ENCODE measurements at regions of chr3 and their contacts with region 1.

Region 1: GRCh38 chr3:156816800-156817645 is 9.1 kb upstream of the LEKR1 start:
- DNase-seq: peak; percentile 90
- H3K4me3 Mint-ChIP-seq: peak overlapping the region; percentile 92
- H3K27ac Mint-ChIP-seq: peak overlapping the region; percentile 98
- H3K4me1 Mint-ChIP-seq: peaks cover 75% of the 10 kb centered on the region
- H3K27me3 Mint-ChIP-seq: no peaks in the 10 kb centered on the region

Region 2: GRCh38 chr3:155870133-155870944 is 946.7 kb before region 1 on chr3 and contains the start of gene GMPS:
- intact Hi-C with region 1: loop called (anchors 5 kb)
- DNase-seq: peak; percentile 98
- H3K4me3 Mint-ChIP-seq: peak within 1 kb of the TSS; percentile 98
- H3K27ac Mint-ChIP-seq: peak within 1 kb of the TSS; percentile 96
- H3K4me1 Mint-ChIP-seq: peaks cover 23% of the 10 kb centered on the region
- H3K27me3 Mint-ChIP-seq: no peaks in the 10 kb centered on the region
- total RNA-seq, gene GMPS: 131 and 144 TPM in 2 replicates

Region 3: GRCh38 chr3:156230267-156230900 is 586.6 kb before region 1 on chr3:
- intact Hi-C with region 1: no loop called
- DNase-seq: no peak
- H3K4me3 Mint-ChIP-seq: no peak overlapping the region
- H3K27ac Mint-ChIP-seq: no peak overlapping the region
- H3K4me1 Mint-ChIP-seq: no peaks in the 10 kb centered on the region
- H3K27me3 Mint-ChIP-seq: peaks cover 5% of the 10 kb centered on the region

Region 4: DNA sequence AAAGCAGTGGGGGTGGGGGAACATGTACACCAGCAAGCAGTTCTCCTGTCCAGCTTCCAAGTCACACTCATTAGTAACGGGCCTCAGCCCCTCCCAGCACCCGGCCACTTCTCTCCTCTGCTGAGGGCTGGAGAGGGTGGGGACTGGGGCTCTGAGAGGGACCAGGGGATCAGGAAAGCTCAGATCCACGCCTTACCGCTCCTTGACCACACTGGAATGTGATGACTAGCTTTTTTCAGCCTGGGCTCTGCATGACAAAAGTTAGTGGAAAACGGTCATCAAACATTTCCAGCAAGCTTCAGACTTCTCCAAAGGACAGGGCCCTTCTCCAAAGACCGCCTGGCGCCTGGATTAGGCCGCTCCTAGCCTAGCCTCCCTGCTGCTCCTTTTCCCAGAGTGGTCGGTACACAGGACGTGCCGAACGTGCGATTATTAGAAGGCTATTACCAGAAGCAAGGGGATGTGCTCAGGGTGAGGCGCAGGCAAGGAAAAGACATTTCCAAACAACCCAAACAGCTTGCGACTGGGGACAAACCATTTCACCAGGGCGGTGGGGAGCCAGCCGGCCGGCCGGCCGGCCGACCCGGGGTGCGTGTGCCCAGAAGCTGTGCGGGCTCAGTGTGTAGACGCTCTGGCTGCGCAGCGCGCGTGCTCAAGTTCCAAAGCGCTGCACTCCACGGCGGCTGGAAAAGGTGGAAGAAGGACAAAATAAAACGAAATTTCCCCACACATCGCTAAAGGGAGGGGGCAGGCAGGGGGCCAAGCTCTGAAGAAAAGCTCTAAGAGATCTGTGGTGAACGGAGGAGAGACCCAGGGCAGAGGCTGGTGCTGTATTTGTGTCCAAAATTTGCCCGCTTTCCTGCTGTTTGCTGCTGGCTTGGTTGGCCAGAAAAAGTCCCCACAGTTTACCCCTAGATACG is 211.1 kb before region 1 on chr3:
- intact Hi-C with region 1: loop called (anchors 5 kb)
- DNase-seq: no peak
- H3K4me3 Mint-ChIP-seq: peak overlapping the region; percentile 82
- H3K27ac Mint-ChIP-seq: peak overlapping the region; percentile 29
- H3K4me1 Mint-ChIP-seq: peaks cover 46% of the 10 kb centered on the region
- H3K27me3 Mint-ChIP-seq: peaks cover 11% of the 10 kb centered on the region

Region 5: DNA sequence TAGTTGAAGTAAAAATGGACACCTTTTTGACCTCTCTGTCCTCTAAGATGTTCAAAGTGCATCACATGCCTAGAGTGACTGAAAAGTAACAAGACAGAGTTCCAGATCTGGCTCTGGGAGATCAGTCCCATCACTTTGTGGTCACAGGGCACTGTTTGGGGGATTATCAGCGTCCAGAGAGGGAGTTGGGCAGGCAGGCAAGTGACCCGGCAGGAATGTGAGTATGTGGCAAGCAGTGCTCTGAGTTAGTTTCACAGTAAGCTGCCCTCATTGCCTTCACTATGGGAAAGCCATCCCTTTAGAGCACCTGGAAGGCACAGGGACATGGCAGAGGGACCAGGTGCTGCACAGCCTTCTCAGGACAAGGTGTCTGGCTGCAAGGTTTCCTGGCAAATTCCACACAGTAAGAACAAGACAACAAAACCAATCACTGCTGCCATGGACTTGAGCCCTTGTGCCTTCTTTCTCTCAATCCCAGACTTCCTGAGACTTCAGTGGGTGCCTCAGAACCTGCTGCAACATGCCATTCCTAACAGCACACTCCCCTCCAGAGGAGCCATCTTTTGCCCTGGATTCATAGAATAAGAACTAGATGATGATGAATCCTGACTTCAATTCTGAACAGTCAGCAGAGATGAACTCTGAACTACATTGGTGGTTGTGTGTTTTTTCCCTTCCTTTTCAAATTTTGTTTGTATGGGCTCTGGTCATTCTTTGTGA is 87.4 kb before region 1 on chr3:
- intact Hi-C with region 1: no loop called
- DNase-seq: no peak
- H3K4me3 Mint-ChIP-seq: no peak overlapping the region
- H3K27ac Mint-ChIP-seq: no peak overlapping the region
- H3K4me1 Mint-ChIP-seq: peaks cover 9% of the 10 kb centered on the region
- H3K27me3 Mint-ChIP-seq: no peaks in the 10 kb centered on the region

Region 6: DNA sequence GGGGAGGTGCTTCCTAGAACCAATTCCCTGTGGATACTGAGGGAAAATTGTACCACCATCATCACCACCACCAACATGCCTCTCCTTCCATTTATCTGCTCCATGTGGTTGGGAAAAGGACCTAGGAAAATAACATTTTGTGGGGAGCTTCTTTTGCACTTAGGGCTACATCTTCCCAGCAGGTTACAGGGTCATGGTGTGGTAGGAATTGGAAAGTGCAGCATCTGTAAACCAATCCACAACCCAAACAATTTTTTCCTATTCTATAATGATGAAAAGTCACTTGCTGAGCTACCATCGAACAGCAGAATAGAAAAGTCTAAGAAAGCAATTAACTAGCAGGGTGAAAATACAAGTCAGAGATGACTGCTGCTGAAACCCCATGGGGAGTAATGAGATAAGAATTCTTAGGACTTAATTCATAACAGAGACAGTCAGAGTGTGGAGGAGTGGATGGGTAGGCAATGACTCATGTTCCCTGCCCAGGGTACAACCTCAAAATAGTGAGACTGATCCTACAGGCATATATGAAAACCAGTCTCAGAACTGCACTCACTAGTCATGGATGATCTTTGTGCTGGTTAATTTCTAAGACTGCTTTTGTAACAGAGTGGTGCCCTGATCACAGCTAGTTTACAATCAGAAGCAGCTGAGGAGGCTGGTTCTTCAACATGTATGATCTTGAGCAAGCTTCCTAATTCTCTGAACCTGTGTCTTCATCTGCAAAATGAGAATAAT is 28.9 kb before region 1 on chr3:
- intact Hi-C with region 1: loop called (anchors 1 kb)
- DNase-seq: no peak
- H3K4me3 Mint-ChIP-seq: no peak overlapping the region
- H3K27ac Mint-ChIP-seq: peak overlapping the region; percentile 10
- H3K4me1 Mint-ChIP-seq: peaks cover 48% of the 10 kb centered on the region
- H3K27me3 Mint-ChIP-seq: no peaks in the 10 kb centered on the region

Region 7: GRCh38 chr3:156920399-156920798 is 103.4 kb after region 1 on chr3:
- intact Hi-C with region 1: no loop called
- DNase-seq: no peak
- H3K4me3 Mint-ChIP-seq: no peak overlapping the region
- H3K27ac Mint-ChIP-seq: no peak overlapping the region
- H3K4me1 Mint-ChIP-seq: no peaks in the 10 kb centered on the region
- H3K27me3 Mint-ChIP-seq: peaks cover 12% of the 10 kb centered on the region

Region 8: DNA sequence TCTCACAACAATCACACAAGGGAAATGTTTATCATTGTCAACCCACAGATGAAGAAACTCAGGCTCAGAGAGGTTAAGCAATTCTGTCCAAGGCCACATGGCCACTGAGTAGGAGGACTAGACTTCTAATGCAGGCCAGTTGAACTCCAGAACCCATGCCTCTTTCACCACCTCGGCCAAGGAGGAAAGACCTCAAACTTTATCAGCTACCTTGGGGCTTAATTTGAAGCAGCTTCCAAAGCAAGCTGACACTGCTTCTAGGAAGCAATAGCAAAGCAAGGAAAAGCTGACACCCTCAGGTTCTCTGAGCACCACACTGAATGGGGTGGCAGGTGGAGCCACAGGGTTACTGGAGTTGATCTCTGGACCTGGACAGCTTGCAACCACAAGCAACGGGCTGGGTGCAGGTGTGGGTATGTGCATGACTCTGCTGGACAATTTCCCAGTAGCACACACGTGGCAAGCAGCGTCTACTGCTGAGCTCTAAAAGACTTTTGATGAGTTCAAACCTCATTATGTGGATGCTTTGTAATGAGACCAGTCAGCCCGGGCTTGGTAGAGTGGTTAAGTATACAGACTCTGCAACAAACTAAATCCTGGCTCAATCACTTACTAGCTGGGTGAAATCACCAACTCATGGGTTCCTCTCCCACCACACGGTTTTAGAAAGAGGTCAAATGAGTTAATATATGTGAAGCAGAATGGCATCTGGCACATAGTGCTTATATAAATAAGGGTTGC is 319.8 kb after region 1 on chr3:
- intact Hi-C with region 1: loop called (anchors 1 kb)
- DNase-seq: no peak
- H3K4me3 Mint-ChIP-seq: no peak overlapping the region
- H3K27ac Mint-ChIP-seq: peak overlapping the region; percentile 35
- H3K4me1 Mint-ChIP-seq: peaks cover 57% of the 10 kb centered on the region
- H3K27me3 Mint-ChIP-seq: no peaks in the 10 kb centered on the region

Region 9: GRCh38 chr3:157423337-157423736 is 606.3 kb after region 1 on chr3:
- intact Hi-C with region 1: no loop called
- DNase-seq: no peak
- H3K4me3 Mint-ChIP-seq: no peak overlapping the region
- H3K27ac Mint-ChIP-seq: no peak overlapping the region
- H3K4me1 Mint-ChIP-seq: no peaks in the 10 kb centered on the region
- H3K27me3 Mint-ChIP-seq: peaks cover 2% of the 10 kb centered on the region